ENCODE measurements at regions of chr1 and their contacts with region 1.

Region 1: DNA sequence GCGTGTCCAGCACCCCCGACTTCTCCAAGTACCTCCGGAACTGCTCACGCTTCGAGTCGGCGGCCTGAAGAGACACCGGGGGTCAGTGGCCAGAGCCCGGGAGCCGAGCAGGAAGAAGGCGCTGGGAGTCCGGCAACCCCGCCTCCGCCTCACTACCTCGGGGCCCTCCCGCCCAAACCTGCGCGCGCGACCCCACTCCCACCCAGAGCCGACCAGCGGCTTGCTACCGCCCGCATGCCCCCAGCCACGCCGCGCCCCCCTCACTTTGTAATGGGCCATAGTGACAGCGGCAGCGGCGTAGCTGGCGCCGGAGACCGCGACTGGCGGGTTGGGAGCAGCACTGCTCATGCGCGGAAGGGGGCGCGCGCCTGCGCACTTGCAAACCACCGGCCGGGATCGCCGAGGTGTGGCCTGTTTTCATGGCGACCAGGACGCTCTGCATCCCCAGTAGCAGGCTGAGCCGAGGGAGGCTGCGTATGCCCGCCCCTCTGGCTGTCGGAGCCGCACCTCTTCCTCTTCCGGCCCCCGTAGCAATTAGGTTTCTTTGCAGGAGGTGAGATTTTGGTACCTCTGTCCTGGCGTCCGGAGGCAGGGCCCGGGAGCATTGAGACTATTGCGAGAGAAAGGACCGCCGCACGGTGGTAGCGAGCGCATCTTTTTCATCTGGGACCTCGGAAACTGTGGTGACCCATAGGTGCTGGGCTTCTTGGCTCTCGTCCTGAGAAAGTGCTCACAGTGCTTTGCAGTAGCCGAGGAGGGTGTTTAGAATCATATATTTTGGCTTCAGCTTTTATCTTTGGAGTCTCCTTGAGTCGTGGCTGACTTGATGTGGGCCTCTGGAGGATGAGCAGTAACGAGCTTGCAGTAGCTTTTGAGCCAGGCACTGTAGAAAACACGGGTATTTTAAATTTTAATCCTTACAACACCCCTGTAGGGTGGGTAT is at the start of gene MYCBP:
- DNase-seq: peak; percentile 95 to 98
- ATAC-seq: peak; percentile 99 to 100 (median 99)
- H3K4me3 ChIP-seq: peak within 1 kb of the TSS; percentile 78
- H3K27ac ChIP-seq: peak within 1 kb of the TSS; percentile 77
- H3K4me1 ChIP-seq: peaks cover 9% of the 10 kb centered on the region
- H3K27me3 ChIP-seq: no peaks in the 10 kb centered on the region
- CTCF ChIP-seq: peak; percentile 11
- total RNA-seq, gene MYCBP: 6.6 to 21.4 (median 10.5) TPM

Region 2: DNA sequence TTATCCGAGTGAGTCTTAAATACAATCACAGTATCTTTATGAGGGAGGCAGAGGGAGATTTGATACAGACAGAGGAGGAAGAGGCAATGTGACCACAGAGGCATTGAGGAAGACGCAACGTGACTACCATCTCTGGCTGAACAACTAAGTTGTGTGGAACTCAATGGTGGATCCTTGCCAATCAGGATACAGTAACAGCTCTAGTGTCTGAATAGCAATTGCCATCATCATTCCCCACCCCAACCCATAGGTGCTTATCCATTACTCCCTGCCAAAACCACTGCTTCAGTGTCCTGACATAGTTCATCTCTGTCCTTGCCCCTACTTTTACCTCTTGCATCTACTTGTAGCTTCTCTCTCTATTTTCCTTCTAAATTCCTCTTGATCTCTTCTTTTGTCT is 88.8 kb after region 1 on chr1:
- intact Hi-C with region 1: no loop called
- DNase-seq: no peak
- ATAC-seq: peak in 3 of 4 donors; percentile 33 to 80 (median 79)
- H3K4me3 ChIP-seq: no peak overlapping the region
- H3K27ac ChIP-seq: no peak overlapping the region
- H3K4me1 ChIP-seq: peaks cover 3% of the 10 kb centered on the region
- H3K27me3 ChIP-seq: peaks cover 0 to 4% (median 0%) of the 10 kb centered on the region in 3 donors
- CTCF ChIP-seq: no peak

Region 3: DNA sequence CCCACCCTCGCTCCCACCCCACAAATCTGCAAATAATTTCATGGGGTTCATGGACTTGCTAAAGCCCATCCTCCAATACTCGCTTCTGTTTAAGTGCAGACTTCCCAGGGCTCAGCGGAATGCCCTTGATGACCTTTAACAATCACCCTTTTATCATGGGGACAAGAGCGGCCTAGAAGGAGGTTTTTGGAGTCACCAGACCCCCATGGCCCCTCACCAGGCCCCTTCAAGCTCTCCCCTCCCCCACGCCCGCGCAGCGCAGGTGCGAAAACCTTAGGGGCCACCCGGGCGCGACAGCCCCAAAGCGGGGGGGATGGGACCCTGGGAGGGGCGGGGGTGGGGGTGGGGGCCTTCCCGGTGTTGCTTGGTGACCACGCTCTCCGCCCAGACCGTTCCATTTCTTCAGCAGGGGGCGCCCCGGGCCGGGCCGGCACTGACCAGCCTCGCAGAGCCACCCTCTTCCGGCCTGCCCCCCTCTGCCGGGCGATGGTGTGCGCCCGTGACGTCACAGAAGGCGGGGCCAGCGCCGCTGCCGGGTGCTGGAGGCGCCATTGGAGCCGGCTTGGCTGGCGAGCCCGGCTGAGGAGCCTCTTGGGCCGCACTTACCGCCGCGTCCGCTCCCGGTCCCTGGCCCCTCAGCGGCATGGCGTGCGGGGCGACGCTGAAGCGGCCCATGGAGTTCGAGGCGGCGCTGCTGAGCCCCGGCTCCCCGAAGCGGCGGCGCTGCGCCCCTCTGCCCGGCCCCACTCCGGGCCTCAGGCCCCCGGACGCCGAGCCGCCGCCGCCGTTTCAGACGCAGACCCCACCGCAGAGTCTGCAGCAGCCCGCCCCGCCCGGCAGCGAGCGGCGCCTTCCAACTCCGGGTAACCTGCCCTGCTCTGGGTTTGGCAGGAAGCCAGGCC is 117.7 kb after region 1 on chr1 and contains the start of gene AKIRIN1:
- intact Hi-C with region 1: loop called in 1 of 2 experiments (anchors 5 kb)
- DNase-seq: peak; percentile 98 to 99
- ATAC-seq: peak; percentile 97 to 99 (median 98)
- H3K4me3 ChIP-seq: peak within 1 kb of the TSS; percentile 97
- H3K27ac ChIP-seq: peak within 1 kb of the TSS; percentile 94
- H3K4me1 ChIP-seq: peaks cover 17% of the 10 kb centered on the region
- H3K27me3 ChIP-seq: no peaks in the 10 kb centered on the region
- CTCF ChIP-seq: peak; percentile 38
- total RNA-seq, gene AKIRIN1: 20.0 to 41.7 (median 35.0) TPM

Region 4: GRCh38 chr1:39026051-39026865 is 153.0 kb after region 1 on chr1 and contains the start of gene NDUFS5:
- intact Hi-C with region 1: loop called in 1 of 2 experiments (anchors 10 kb)
- DNase-seq: peak; percentile 92 to 96
- ATAC-seq: peak; percentile 94 to 97 (median 96)
- H3K4me3 ChIP-seq: peak within 1 kb of the TSS; percentile 94
- H3K27ac ChIP-seq: peak within 1 kb of the TSS; percentile 97
- H3K4me1 ChIP-seq: peaks cover 18% of the 10 kb centered on the region
- H3K27me3 ChIP-seq: no peaks in the 10 kb centered on the region
- CTCF ChIP-seq: no peak
- total RNA-seq, gene NDUFS5: 276 to 407 (median 350) TPM

Region 5: GRCh38 chr1:39091845-39092645 is 218.7 kb after region 1 on chr1:
- intact Hi-C with region 1: loop called in 1 of 2 experiments (anchors 5 kb)
- DNase-seq: peak; percentile 75 to 79
- ATAC-seq: peak; percentile 51 to 79 (median 56)
- H3K4me3 ChIP-seq: no peak overlapping the region
- H3K27ac ChIP-seq: no peak overlapping the region
- H3K4me1 ChIP-seq: peaks cover 30% of the 10 kb centered on the region
- H3K27me3 ChIP-seq: no peaks in the 10 kb centered on the region
- CTCF ChIP-seq: peak; percentile 57